AG04450 (cell line): ENCODE measurements at regions of chr3 and their contacts with region 1.

Region 1: GRCh38 chr3:13091898-13092611 is 18.8 kb upstream of the IQSEC1 start:
- DNase-seq: peak; percentile 33
- H3K4me3 ChIP-seq: no peak overlapping the region
- H3K27ac ChIP-seq: no peak overlapping the region
- H3K27me3 ChIP-seq: peaks cover 14% of the 10 kb centered on the region
- CTCF ChIP-seq: peak; percentile 91

Region 2: GRCh38 chr3:13104510-13104909 is 12.5 kb after region 1 on chr3:
- CTCF ChIA-PET with region 1: interaction called, 16 read pairs
- POLR2A ChIA-PET with region 1: no interaction called
- DNase-seq: no peak
- H3K4me3 ChIP-seq: no peak overlapping the region
- H3K27ac ChIP-seq: no peak overlapping the region
- H3K27me3 ChIP-seq: peaks cover 15% of the 10 kb centered on the region
- CTCF ChIP-seq: no peak

Region 3: DNA sequence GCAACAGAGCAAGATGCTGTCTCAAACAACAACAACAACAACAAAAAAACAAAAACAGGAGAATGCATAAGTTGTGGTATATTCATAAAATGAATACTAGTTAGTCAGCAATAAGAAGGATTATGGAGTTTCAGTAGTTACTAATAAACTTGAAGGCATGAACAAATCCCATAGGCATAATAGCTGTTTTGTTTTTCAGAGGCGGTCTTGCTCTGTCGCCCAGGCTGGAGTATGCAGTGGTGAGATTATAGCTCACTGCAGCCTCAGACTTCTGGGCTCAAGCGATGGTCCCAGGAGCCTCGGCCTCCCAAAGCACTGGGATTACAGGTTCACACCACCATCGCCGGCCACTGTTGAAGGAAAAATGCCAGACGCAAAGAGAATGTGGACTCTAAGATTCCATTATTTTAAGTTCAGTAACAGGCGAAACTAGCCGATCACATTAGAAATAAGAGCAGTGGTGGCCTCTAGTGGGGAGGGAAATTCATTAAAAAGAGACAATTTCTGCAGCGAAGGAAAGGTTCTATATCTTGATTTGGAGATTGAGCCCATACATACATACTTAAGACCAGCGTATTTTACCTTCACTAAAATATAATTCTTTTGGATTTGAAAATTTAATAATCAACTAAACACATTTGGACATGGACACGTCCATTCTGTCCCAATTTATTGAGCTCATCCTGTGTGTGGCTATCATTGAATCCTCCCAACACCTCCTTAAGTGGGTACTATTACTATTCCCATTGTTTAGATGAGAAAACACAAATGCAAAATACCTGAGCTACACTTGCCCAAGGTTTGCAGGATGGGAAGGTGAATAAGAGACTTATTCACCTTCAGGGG is 360.7 kb after region 1 on chr3:
- CTCF ChIA-PET with region 1: interaction called, 136 read pairs
- POLR2A ChIA-PET with region 1: interaction called, 5 read pairs
- DNase-seq: peak; percentile 11
- H3K4me3 ChIP-seq: no peak overlapping the region
- H3K27ac ChIP-seq: no peak overlapping the region
- H3K27me3 ChIP-seq: no peaks in the 10 kb centered on the region
- CTCF ChIP-seq: peak; percentile 73

Region 4: DNA sequence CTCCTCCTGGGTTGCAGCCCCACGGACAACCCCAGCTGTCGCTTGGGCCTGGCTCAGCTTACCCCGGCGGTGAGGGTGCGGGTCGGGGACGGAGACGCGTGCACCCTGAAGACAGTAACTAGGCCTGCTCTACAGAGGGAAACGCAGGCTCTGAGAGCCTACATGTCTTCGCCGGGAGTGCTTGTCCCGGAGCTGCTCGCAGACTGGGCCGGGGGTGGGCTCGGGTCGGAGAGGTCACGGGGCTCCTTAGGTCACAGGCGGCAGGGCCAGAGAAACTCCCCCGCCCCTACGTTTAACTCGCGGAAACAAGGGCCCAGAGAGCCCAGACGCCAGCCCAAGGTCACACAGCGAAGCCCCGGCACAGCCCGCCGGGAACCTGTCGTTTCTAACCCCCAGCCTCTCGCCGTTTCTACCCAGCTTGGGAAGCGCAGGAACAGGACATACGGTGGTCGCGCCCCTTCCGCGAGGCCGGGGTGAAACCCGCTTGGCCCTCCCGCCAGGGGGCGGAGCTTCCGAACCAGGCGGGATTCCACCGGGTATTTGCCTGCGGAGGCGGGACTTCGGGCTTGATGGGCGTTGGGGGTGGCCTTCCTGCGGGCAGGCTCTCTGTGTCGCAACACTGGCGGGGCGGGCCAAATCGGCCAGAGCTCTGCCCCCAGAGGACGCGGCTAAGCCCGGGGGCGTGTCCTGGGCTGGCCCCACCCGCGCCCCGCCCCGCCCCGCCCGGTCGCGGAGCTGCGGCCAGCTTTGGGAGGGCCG is 387.7 kb after region 1 on chr3 and contains the start of gene HDAC11:
- CTCF ChIA-PET with region 1: interaction called, 15 read pairs
- POLR2A ChIA-PET with region 1: no interaction called
- DNase-seq: peak; percentile 90
- H3K4me3 ChIP-seq: peak within 1 kb of the TSS; percentile 72
- H3K27ac ChIP-seq: peak within 1 kb of the TSS; percentile 21
- H3K27me3 ChIP-seq: peaks cover 6% of the 10 kb centered on the region
- CTCF ChIP-seq: no peak
- polyA plus RNA-seq, gene HDAC11: 7.1 and 7.5 TPM in 2 replicates

Region 5: GRCh38 chr3:13648060-13649001 is 556.3 kb after region 1 on chr3:
- CTCF ChIA-PET with region 1: interaction called, 35 read pairs
- POLR2A ChIA-PET with region 1: no interaction called
- DNase-seq: peak; percentile 58
- H3K4me3 ChIP-seq: no peak overlapping the region
- H3K27ac ChIP-seq: no peak overlapping the region
- H3K27me3 ChIP-seq: peaks cover 10% of the 10 kb centered on the region
- CTCF ChIP-seq: peak; percentile 100